Dendritic cell treated with granulocyte-macrophage colony-stimulating factor and Interleukin-4, amounts not matched to agents 40 ng/mL and 50 ng/mL, for 4 days (primary cell): ENCODE measurements at regions of chr10 and their contacts with region 1.

Region 1: DNA sequence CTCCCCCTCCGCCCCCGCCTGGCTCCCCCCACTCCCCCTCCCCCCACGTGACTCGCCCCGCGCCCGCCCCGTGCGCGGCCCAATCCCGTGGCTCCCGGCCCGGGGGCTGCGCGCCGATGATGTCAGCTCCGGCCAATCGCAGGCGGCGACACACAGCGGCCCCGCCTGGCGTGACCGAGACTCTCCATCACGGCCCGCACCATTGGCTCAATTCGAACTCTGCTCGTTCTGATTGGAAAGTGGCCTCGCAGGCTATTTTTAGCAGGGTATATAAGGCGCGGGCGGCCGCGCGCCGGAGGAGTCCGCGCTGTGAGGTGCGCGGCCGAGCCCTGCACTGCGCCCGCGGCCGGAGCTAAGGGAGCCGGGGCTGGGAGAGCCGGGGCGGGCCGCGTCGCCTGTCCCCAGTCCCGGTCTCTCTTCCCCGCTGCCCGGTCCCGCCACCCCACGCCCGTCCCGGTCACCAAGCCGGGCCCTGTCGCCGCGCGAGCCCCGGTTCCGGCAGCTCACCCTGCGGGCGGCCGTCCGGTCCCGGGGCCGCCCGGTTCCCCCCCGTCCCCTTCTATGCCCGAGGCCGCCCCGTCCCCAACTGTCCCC is 345 bp upstream of the KLF6 start:
- H3K4me3 Mint-ChIP-seq: peak overlapping the region; percentile 86
- H3K27ac Mint-ChIP-seq: peak overlapping the region; percentile 99
- H3K4me1 Mint-ChIP-seq: peaks cover 28% of the 10 kb centered on the region
- H3K27me3 Mint-ChIP-seq: no peaks in the 10 kb centered on the region

Region 2: DNA sequence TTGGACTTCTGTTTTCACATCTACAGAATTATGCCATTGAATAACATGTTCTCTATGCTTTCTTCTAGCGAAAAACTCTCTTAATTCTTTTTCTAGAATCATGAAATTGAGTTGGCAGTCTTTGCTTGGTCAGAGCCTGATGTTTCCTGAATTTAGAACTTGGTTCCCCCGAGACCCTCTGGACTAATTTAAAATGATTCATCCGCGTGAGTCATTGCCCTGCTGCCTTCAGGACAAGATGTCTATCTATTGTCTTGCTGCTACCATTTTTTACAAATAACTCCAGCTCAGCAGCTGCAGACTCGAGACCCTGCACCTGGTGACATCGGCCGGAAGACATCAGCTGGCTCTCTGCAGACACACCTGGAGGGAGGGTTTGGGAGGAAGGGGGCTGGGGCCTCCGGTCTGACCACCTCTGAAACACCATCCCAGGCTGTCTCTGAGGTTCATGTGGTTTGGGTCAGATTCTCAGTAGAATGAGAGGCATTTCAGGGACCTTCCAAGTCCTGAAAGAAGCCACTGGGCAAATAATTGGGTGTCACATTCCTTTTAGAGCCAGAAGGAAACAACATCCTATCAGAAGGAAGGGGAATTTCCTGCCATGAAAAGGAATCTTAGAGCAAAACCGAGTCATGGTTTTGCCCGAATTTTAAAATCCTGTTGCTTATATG is 20.6 kb after region 1 on chr10:
- intact Hi-C with region 1: loop called (anchors 1 kb)
- H3K4me3 Mint-ChIP-seq: no peak overlapping the region
- H3K27ac Mint-ChIP-seq: no peak overlapping the region
- H3K4me1 Mint-ChIP-seq: peaks cover 60% of the 10 kb centered on the region
- H3K27me3 Mint-ChIP-seq: no peaks in the 10 kb centered on the region

Region 3: GRCh38 chr10:3873728-3874461 is 88.5 kb after region 1 on chr10:
- intact Hi-C with region 1: loop called (anchors 1 kb)
- H3K4me3 Mint-ChIP-seq: no peak overlapping the region
- H3K27ac Mint-ChIP-seq: peak overlapping the region; percentile 74
- H3K4me1 Mint-ChIP-seq: peaks cover 57% of the 10 kb centered on the region
- H3K27me3 Mint-ChIP-seq: no peaks in the 10 kb centered on the region

Region 4: DNA sequence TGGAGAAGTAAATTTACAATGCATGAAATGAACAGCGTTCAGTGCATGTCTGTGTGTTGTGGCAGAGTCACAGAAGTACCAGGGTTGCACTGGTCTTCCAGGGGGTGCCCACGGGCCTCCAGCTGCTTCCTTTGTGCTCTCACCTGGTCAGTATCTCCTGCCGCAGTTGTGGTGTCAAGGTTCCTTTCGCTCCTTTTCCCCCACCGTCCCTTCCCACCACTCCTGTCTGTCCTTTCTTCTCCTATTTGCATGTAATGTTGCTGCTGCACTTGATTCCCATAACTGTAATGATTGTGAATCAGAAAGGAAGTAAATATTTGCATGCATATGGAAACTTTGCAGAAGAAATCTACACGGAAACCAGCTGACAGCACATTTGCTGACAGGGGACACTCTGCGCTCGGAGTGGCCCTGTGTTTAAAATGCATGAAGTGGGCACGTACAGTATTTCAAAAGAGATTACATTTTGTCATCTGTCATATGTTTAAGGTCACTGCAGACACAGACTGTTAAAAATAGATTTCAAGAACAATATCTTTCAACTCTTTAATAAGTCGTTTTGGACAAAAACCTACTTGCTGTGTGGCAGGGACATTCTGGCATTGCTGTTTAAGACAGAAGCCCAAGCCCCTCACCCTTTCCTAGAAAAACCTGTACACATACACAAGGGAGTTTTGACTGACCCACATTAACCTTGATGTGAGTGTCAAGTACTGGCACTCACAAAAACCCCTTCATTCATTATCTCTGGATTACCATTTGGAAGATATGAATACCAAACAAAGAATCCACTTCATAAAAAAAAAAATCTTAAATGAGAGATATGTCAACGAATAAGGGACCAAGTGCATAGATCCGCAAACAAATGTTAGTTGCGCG is 336.4 kb after region 1 on chr10:
- intact Hi-C with region 1: loop called (anchors 2 kb)
- H3K4me3 Mint-ChIP-seq: peak overlapping the region; percentile 80
- H3K27ac Mint-ChIP-seq: peak overlapping the region; percentile 97
- H3K4me1 Mint-ChIP-seq: peaks cover 35% of the 10 kb centered on the region
- H3K27me3 Mint-ChIP-seq: no peaks in the 10 kb centered on the region

Region 5: DNA sequence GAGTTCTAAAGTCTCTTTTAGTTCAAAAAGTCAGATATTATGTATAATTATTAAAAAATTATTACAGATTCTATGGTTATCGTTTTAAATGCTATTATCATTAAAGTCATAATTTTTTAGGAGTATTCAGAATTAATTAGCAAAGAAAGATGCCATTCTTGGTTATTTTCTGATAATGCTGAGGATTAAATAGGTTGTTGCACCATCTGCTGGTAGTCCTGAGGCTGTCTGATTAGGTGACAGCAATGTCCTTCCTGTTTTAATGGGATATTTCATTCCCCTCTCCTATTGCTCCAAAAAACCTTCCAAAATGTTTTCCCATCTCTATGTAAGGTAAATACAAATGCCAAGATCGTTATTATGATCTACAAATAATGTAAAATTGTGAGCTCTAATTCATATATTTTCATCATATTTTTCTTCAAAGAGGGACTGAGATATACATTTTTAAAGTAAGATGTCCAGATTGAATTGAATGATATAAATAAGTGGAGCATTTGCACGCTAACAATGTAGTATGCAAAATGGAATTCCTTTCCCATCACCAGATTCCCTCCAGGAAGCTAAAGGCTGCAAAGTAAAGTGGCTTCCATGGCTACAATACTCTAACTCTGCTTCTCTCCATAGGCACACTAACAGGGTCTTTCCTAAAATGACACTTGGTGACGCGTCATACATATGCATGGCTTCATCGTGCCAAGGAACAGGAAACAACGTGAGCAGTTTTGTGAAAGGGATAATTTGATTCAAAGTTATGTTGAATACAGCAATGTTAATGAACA is 981.9 kb after region 1 on chr10:
- intact Hi-C with region 1: loop called (anchors 10 kb)
- H3K4me3 Mint-ChIP-seq: no peak overlapping the region
- H3K27ac Mint-ChIP-seq: no peak overlapping the region
- H3K4me1 Mint-ChIP-seq: no peaks in the 10 kb centered on the region
- H3K27me3 Mint-ChIP-seq: peaks cover 7% of the 10 kb centered on the region